ENCODE measurements at regions of chr17 and their contacts with region 1.

Region 1: GRCh38 chr17:67183531-67183930 is 61.5 kb downstream of the HELZ start:
- DNase-seq: no peak
- ATAC-seq: no peak

Region 2: GRCh38 chr17:67059372-67059771 is 124.2 kb before region 1 on chr17:
- intact Hi-C with region 1: no loop called
- DNase-seq: no peak
- ATAC-seq: no peak

Region 3: GRCh38 chr17:67121316-67121887 is 62.1 kb before region 1 on chr17:
- intact Hi-C with region 1: loop called (anchors 10 kb)
- DNase-seq: no peak
- ATAC-seq: peak; percentile 60

Region 4: GRCh38 chr17:67148352-67148751 is 35.2 kb before region 1 on chr17:
- intact Hi-C with region 1: no loop called
- DNase-seq: no peak
- ATAC-seq: no peak

Region 5: DNA sequence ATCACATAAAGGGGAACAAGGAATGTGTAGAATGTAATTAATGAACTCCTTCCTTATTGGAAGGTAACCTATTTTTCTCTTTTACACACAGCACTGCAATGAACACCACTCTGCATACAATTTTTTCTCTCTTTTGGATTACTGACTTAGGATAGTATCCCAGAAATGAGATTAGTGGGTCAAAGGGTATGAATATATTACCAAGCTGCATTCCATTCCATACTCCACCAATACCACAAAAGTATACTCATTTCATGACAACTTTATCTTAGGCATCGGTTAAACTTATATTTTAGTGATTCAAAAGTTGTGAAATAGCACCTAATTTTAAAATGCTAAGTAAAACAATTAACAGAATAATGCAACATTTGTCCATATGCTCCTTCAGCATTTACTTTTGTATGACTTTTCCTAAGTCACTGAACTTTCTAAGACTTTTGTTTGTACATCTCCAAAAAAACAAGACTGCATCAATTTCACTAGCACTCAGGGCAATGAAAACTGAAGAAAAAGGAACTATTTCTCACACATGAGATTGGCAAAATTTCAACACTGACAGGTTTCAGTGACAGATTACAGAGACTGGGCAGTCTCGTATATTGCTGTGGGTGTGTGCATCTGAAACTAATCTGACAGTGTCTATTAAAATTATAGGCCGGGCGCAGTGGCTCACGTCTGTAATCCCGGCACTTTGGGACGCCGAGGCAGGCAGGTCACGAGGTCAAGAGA is 29.3 kb after region 1 on chr17:
- intact Hi-C with region 1: no loop called
- DNase-seq: no peak
- ATAC-seq: no peak

Region 6: DNA sequence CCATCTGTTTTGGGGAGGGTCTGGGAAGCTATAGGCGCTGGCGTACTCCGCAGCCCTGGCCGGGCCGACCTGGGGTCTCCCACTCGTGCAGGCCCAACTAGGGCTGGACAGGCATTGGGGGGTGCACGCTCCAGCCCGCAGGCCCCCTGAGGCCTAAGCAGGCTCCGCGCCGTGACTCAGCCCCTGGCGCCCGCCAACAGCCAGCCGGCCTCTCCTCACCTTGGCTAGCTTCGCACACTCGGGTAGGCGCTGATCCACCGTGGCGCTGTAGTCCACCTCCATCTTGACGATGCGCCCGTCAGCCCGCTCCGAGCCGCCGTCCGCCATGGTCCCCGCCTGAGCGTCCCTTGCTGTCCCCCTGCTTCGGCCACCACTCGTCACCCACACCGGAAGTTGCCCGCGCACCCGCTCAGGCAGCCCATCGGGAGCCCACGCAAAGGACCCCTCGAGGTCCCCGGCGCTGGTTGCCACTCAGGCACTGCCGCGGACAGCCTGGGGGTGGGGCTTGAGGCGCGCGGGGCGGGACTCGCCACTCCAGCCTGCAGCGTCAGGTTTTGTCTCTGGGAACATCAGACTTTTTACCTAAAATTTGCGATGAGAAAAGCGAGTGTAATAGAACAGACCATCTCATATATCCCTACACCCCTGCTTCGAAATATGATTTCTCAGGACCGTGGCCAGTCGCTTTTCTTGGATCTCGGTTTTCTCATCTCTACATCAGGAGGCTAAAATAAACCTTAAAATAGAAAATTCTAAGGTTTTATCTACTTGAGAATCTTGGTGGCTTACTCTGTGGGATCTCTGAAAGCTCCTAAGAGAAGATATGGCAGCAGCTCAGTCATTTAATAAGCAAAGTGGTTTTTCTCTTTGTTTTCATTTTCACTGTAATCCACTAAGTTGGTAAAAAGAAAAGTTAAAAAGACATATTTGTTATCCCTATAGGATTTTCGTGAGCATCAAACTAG is 182.9 kb after region 1 on chr17 and contains the start of gene PSMD12:
- intact Hi-C with region 1: no loop called
- DNase-seq: peak; percentile 98
- ATAC-seq: peak; percentile 99
- total RNA-seq, gene PSMD12: 45.5 TPM

Measured in Right ventricle myocardium inferior (tissue), 1 donor.